ENCODE measurements at regions of chr17 and their contacts with region 1.

Region 1: GRCh38 chr17:64470625-64471024 is 21.7 kb downstream of the MILR1 start:
- DNase-seq: no peak
- ATAC-seq: no peak
- H3K4me3 Mint-ChIP-seq: no peak overlapping the region
- H3K27ac Mint-ChIP-seq: no peak overlapping the region
- H3K4me1 Mint-ChIP-seq: peaks cover 8% of the 10 kb centered on the region
- H3K27me3 Mint-ChIP-seq: no peaks in the 10 kb centered on the region
- CTCF ChIP-seq: no peak

Region 2: GRCh38 chr17:64459284-64459747 is 11.3 kb before region 1 on chr17:
- CTCF ChIA-PET with region 1: no interaction called
- POLR2A ChIA-PET with region 1: interaction called, 13 read pairs
- intact Hi-C with region 1: loop called (anchors 2 kb)
- DNase-seq: no peak
- ATAC-seq: no peak
- H3K4me3 Mint-ChIP-seq: no peak overlapping the region
- H3K27ac Mint-ChIP-seq: no peak overlapping the region
- H3K4me1 Mint-ChIP-seq: peaks cover 47% of the 10 kb centered on the region
- H3K27me3 Mint-ChIP-seq: no peaks in the 10 kb centered on the region
- CTCF ChIP-seq: no peak

Region 3: DNA sequence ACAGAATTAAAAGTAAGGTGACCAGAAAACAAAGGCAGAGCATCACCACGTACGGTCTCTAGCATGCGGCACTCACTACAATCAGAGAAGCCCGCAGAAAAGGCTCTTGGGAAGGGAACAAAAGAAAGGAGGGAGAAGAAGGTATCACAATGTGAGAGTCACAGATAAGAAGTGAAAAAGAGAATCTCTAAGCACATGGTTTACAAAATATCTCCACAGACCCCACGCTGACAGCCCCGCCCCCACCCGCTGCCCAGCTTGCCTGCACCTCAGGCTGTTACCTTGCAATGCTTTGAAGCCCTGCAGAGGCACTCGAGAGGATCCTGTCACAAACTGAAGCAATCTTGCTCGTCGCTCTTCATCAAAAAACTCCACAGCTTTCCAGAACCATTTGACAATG is 76.7 kb after region 1 on chr17:
- CTCF ChIA-PET with region 1: no interaction called
- POLR2A ChIA-PET with region 1: no interaction called
- intact Hi-C with region 1: no loop called
- DNase-seq: no peak
- ATAC-seq: no peak
- H3K4me3 Mint-ChIP-seq: no peak overlapping the region
- H3K27ac Mint-ChIP-seq: no peak overlapping the region
- H3K4me1 Mint-ChIP-seq: no peaks in the 10 kb centered on the region
- H3K27me3 Mint-ChIP-seq: no peaks in the 10 kb centered on the region
- CTCF ChIP-seq: no peak